GM10248 (cell line): ENCODE measurements at regions of chr10 and their contacts with region 1.

Region 1: DNA sequence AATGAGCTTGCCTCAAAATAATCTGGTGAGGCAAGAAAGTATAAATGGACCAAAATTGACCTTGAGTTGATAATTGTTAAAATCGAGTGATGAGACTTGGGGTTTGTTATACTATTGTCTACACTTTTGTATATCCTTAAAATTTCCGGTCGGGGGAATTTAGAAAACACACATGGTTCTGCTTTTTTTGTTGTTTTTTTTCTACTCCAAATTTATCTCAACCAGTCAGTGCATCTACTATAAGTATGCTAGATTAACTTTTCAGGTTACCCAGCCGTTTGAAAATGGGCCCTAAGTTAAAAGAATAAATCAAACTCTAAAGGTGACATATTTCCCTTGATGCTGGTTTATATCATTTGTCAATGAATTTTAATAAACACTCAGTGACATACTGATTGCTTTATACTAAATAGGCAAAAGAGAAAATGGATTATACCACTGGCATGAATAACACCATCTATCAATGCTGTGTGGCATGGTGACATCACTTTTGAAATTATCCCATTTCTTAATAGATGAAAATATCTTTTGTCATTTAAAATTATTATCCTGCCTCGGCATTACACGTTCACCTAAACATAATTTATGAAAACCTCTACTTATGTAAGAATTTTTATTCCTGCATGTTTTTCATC is 40.3 kb upstream of the ST8SIA6 start:
- DNase-seq: no peak
- CTCF ChIP-seq: no peak

Region 2: DNA sequence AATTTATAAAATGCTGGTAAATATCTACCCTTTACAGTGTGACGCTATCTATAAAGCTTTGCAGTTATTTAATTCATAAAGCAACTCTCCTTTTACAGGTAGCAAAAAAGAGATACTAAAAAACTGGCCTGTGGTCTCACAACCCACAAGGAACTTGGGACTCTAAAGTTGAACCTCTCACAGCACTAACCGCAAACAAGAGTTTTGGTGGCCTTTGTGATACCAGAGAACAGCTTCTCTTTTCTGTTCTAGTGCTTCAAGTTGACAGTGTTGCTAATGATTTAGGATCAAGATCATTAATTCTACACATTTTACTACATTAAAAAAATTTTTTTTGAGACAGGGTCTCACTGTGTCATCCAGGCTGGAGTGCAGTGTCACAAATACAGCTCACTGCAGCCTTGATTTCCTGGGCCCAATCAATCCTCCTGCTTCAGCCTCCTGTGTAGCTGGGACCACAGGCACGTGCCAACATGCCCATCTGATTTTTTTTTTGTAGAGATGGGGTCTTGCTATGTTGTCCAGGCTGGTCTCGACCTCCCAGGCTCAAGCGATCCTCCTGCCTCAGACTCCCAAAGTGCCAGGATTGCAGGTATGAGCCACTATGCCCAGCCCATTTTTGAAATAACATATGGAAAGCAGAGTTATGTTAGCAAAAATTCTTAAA is 15.6 kb after region 1 on chr10:
- CTCF ChIA-PET with region 1: interaction called, 10 read pairs
- POLR2A ChIA-PET with region 1: no interaction called
- DNase-seq: peak; percentile 49
- CTCF ChIP-seq: no peak